Activated CD4-positive, alpha-beta memory T cell treated with anti-CD3 and anti-CD28 coated beads for 36 hours (primary cell): ENCODE measurements at regions of chr22 and their contacts with region 1.

Region 1: DNA sequence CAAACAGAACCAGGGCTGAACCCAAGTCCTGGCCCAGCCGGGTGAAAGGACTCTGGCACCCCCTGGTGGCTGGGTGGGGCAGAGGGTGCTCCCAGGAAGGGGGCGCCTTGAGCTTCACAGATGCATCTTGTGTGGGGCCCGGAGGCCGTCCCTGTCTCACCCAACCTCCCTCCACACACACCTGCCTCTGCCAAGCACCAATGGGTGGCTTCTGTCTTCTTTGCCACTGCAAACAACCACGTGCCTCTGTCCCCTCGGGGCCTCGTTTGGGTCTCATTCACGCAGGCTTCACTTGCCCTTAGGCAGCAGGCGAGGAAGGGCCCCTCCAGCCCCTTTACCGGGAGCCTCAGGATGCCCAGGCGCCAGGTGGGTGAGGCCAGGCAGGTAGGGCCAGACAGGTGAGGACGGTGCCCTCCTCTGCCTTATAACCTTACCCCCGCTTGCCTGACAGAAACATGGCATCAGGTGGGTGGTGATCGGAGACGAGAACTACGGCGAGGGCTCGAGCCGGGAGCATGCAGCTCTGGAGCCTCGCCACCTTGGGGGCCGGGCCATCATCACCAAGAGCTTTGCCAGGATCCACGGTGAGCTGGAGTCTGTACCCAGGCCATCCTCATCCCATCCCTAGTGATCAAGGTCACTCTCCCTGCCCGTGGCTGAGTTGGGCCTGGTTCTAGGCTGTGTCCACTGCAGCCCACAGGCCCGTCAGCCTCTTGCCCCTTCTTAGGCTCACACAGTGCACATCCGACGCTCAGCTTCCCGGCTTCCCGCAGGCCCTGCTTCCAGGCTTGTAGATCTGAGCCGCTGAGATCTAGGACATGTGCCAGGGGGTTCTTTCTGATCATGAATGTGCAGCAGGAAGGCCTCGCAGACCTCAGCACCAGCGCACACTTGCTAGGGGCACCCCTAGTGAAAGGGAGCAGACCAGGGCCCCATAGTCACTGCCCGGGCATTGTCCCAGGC is 17.2 kb downstream of the POLR3H start:
- DNase-seq: peak; percentile 65
- H3K4me3 Mint-ChIP-seq: no peak overlapping the region
- H3K27ac Mint-ChIP-seq: peak overlapping the region; percentile 38
- H3K4me1 Mint-ChIP-seq: peaks cover 14% of the 10 kb centered on the region
- H3K27me3 Mint-ChIP-seq: no peaks in the 10 kb centered on the region

Region 2: GRCh38 chr22:41411021-41411851 is 115.9 kb before region 1 on chr22:
- CTCF ChIA-PET with region 1: interaction called, 10 read pairs
- POLR2A ChIA-PET with region 1: no interaction called
- intact Hi-C with region 1: no loop called
- DNase-seq: no peak
- H3K4me3 Mint-ChIP-seq: no peak overlapping the region
- H3K27ac Mint-ChIP-seq: peak overlapping the region; percentile 74
- H3K4me1 Mint-ChIP-seq: peaks cover 26% of the 10 kb centered on the region
- H3K27me3 Mint-ChIP-seq: no peaks in the 10 kb centered on the region

Region 3: DNA sequence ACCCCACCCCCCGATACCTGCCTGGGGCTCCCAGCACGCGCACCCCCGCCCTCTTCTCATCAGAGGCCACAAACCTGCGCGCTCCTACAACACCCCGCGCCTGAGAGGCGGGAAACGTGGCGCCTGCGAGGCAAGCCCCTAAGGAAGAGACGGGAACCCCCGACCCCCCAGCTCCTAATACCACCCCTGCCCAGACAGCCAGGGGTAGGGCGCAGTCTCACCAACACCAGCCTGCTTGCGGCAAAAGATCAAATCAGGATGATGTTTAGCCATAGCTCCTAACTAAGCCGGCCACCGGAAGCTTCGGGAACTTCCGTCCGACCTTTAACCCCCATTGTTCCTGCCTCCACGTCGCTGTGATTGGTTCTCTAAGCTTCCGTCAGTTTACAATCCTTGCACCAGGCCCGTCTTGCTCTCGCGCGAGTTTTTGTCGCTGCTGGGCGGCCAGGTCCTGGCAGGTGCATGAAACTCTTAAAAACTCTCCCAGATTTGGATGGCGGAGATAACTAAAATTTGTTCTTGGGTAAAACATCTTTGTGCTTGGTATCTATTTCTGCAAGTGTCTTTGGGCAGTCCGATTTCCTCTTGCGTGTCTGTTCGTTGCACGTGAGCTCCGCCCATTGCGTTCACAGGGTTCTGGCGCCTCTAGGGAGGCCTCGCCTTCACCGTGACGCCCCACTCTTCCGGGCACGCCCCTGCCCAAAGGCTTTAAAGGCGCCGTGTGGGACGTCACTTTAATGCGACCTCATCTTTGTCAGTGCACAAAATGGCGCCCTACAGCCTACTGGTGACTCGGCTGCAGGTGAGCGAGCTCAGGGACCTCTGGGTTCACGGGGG is 58.5 kb before region 1 on chr22 and contains the starts of genes ACO2 and PHF5A:
- CTCF ChIA-PET with region 1: interaction called, 13 read pairs
- POLR2A ChIA-PET with region 1: interaction called, 3 read pairs
- intact Hi-C with region 1: no loop called
- DNase-seq: peak; percentile 99
- H3K4me3 Mint-ChIP-seq: peak within 1 kb of the TSS; percentile 93
- H3K27ac Mint-ChIP-seq: peak within 1 kb of the TSS; percentile 99
- H3K4me1 Mint-ChIP-seq: peaks cover 51% of the 10 kb centered on the region
- H3K27me3 Mint-ChIP-seq: no peaks in the 10 kb centered on the region
- total RNA-seq, gene ACO2: 103 to 105 TPM
- total RNA-seq, gene PHF5A: 55.4 to 60.0 TPM